ENCODE measurements at regions of chr11 and their contacts with region 1.

Region 1: GRCh38 chr11:35272391-35272902 is 133.5 kb downstream of the CD44 start:
- DNase-seq: peak; percentile 54
- H3K4me3 Mint-ChIP-seq: peak overlapping the region; percentile 3
- H3K27ac Mint-ChIP-seq: peak overlapping the region; percentile 86
- H3K4me1 Mint-ChIP-seq: peaks cover 61% of the 10 kb centered on the region
- H3K27me3 Mint-ChIP-seq: peaks cover 12% of the 10 kb centered on the region

Region 2: DNA sequence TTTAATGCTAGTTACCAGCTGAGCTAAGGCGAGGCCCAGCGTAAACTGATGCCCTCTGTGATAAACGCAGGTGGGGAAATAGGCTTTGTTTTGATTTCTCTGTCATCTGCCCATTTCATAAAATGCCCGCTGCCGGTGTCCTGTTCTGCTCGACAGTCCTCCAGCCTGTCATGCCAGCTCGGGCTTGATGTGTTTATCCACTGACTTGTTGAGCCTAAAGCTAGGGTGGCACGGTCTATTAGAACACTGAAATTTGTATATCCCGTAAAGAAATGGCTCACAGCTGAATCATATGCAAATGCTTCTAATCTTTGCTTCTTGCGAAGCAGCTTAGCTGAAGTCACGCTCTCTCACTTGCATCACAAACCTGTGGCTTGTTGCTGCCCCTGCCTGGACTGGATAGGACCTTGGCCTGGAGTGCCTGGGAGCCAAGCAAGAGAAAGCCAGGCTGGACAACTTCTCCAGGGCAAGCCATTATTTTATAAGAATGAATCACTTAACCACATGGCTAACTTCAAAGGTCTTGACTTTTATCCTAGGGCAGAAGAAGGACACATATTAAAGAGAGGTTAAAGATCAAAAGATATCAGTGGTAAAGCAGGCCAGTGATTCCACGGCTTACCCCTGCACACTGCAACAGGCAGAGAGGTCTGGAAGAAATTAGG is 618.5 kb before region 1 on chr11:
- intact Hi-C with region 1: loop called (anchors 1 kb)
- DNase-seq: no peak
- H3K4me3 Mint-ChIP-seq: no peak overlapping the region
- H3K27ac Mint-ChIP-seq: no peak overlapping the region
- H3K4me1 Mint-ChIP-seq: peaks cover 21% of the 10 kb centered on the region
- H3K27me3 Mint-ChIP-seq: peaks cover 66% of the 10 kb centered on the region

Region 3: GRCh38 chr11:35173011-35173511 is 99.4 kb before region 1 on chr11:
- intact Hi-C with region 1: loop called (anchors 1 kb)
- DNase-seq: no peak
- H3K4me3 Mint-ChIP-seq: peak overlapping the region; percentile 56
- H3K27ac Mint-ChIP-seq: peak overlapping the region; percentile 75
- H3K4me1 Mint-ChIP-seq: peaks cover 92% of the 10 kb centered on the region
- H3K27me3 Mint-ChIP-seq: no peaks in the 10 kb centered on the region

Region 4: DNA sequence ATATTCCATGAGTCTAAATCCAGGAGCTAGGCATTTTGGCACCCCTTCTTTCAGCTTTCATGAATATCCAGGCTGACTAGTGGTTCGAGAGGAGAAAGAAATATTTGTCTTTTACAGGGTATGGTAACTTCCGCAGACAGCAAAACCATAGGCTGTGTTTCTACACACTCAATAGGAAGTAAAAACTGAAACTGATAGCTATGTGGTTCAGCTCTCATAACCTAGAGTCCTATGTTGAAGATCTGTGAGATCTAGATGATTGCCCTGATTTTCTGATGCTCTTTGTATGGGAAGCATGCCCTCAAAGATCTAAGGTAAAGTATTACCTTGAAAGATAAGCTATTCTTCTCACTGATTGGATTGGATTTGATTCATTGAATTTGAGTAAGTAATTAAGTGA is 15.2 kb before region 1 on chr11:
- intact Hi-C with region 1: loop called (anchors 1 kb)
- DNase-seq: no peak
- H3K4me3 Mint-ChIP-seq: no peak overlapping the region
- H3K27ac Mint-ChIP-seq: no peak overlapping the region
- H3K4me1 Mint-ChIP-seq: peaks cover 25% of the 10 kb centered on the region
- H3K27me3 Mint-ChIP-seq: peaks cover 31% of the 10 kb centered on the region

Region 5: DNA sequence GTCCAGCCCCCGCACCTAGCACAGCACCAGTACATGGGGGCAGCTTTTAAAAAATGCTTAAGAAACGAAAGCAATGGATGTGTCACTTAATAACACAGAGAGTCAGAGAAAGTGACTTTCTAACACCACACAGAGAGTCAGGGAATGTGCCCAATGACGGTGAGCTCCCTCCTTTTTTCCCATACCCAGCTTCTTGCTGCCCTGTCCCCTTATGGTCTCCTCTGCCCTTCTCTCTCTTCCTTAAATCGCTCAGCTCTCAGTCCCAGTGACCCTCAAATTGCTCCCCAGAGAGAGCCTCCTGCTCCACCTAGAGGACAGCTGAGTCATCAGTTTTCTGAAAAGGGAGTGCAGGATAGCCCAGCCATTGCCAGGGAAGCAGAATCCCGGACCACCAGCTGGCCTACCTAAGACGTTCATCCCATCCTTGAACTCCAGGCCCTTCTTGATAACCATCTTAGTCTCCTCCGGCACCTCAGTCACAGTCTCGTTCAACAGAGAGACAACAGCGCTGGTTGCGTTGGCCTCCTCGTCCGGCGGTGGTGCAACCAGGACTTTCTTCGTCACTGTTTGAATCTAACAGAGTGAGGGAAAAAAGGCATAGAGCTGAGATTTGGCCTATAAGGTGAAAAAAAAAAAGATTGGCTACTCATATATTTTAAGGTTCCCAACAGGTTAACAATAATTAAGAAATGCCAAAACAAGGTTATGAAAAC is 33.4 kb after region 1 on chr11:
- intact Hi-C with region 1: loop called (anchors 1 kb)
- DNase-seq: no peak
- H3K4me3 Mint-ChIP-seq: no peak overlapping the region
- H3K27ac Mint-ChIP-seq: no peak overlapping the region
- H3K4me1 Mint-ChIP-seq: peaks cover 28% of the 10 kb centered on the region
- H3K27me3 Mint-ChIP-seq: peaks cover 4% of the 10 kb centered on the region

Region 6: DNA sequence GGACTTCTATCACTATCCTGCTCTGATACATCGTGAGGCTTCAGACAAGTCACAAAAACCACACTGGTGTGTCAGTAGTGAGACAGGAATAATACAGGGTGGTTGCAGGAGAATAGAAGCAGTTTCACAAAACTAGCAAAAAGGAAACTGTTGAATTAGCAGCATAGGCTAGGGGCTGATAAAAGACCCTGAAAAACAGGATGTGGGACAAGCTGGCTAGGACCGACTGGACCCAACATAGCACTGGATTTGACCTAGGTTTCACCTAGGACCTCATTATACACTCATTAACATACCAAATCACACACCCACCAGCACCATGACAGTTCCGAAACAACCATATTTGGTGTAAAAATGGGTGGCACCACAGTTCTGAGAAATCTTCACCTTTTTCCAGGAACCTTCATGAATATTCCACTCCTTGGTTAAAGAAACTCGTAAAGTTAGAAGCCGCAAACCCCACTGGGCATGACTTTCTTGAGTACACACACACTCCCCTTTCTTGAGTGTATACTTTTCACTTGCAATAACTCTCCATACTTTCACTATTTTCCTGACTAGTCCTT is 70.7 kb after region 1 on chr11:
- intact Hi-C with region 1: loop called (anchors 1 kb)
- DNase-seq: peak; percentile 65
- H3K4me3 Mint-ChIP-seq: peak overlapping the region; percentile 27
- H3K27ac Mint-ChIP-seq: peak overlapping the region; percentile 79
- H3K4me1 Mint-ChIP-seq: peaks cover 46% of the 10 kb centered on the region
- H3K27me3 Mint-ChIP-seq: peaks cover 9% of the 10 kb centered on the region

Region 7: GRCh38 chr11:35825033-35825785 is 552.8 kb after region 1 on chr11:
- intact Hi-C with region 1: no loop called
- DNase-seq: no peak
- H3K4me3 Mint-ChIP-seq: no peak overlapping the region
- H3K27ac Mint-ChIP-seq: no peak overlapping the region
- H3K4me1 Mint-ChIP-seq: no peaks in the 10 kb centered on the region
- H3K27me3 Mint-ChIP-seq: peaks cover 2% of the 10 kb centered on the region

Measured in activated T-helper 1 cell treated with anti-CD3 and anti-CD28 coated beads, Interleukin-12 subunit alpha, Interleukin-12 subunit beta, Interleukin-2, Interleukin-4 antibody, amounts not matched to agents 30 ng/mL and 10 ng/mL and 1 ng/mL, durations not matched to agents 14 hours and 24 hours and 36 hours (primary cell).